PC-3 (cell line): ENCODE measurements at regions of chr1 and their contacts with region 1.

Region 1: DNA sequence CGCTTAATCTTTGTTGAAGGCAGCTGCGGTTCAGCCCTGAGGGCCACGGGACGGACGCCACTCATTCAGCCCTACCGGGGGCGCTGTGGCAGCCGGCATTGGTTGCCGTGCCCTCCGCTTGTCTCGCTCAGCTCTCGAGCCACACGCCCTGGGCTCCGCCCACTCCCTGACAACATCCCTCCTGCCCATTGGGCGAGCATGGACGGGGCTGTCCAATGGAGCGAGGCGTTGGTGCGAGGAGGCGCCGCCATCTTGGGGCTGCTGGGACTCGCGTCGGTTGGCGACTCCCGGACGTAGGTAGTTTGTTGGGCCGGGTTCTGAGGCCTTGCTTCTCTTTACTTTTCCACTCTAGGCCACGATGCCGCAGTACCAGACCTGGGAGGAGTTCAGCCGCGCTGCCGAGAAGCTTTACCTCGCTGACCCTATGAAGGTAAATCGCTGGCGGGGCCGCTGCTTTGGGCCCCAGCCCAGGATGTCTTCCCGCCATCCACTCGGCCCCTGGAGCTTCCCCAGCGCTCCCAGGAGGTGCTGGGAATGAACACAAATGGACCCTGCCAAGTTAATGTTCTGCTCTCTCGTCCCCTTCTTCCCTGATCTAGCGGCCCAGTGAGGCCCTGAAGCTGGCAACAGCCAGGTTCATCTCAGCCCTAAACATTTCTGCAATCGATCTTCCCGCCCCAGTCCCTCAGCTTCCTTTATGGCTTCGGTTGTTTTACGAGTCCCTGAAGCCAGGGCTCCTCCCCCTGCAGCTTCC is at the start of gene SRP9:
- DNase-seq: peak; percentile 100
- ATAC-seq: peak; percentile 92
- H3K4me3 ChIP-seq: peak within 1 kb of the TSS; percentile 78
- H3K27ac ChIP-seq: peak within 1 kb of the TSS; percentile 84
- H3K4me1 ChIP-seq: peaks cover 46% of the 10 kb centered on the region
- H3K27me3 ChIP-seq: no peaks in the 10 kb centered on the region
- CTCF ChIP-seq: peak; percentile 94
- total RNA-seq, gene SRP9: 241 and 306 TPM in 2 replicates

Region 2: DNA sequence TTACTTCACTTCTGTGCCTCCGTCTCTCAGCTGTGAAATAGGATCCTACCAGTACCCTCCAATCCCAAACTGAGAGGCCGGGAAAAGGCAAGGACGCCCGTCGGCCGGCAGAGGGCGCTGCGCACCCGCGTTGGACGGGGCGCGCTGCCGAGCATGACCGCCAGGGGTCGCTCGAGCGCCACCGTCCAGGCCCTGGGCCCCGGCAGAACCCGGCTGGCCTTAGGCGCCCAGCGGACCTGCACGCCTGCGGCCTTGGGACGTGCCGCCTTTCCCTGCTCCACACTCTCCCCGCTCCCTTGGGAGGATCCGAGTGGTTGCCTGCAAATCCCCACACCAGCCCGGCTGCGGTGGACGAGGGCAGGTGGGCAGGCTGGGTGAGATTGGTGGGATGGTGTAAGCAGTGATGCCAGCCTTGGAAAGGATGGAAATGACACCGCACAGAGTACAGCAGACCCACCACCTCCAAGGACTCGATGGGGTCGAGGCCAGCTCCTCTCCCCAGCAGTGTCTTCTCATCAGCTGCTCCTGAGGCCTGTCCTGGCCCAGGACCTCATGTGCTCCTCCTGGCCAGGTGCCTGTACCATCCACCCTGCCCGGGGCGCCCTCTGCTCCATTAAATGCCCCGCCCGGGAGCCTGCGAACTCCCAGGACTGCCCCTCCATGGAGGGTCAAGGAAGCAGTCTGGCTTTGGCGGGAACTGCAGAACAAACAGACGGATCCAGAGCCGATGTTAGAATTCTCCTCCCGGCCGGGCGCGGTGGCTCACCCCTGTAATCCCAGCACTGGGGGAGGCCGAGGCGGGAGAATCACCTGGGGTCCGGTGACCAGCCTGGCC is 302.6 kb before region 1 on chr1:
- CTCF ChIA-PET with region 1: interaction called, 5 read pairs
- POLR2A ChIA-PET with region 1: no interaction called
- intact Hi-C with region 1: loop called (anchors 1 kb)
- DNase-seq: peak; percentile 82
- ATAC-seq: peak; percentile 90
- H3K4me3 ChIP-seq: no peak overlapping the region; the same call in 1 of the 2 replicates
- H3K27ac ChIP-seq: no peak overlapping the region
- H3K4me1 ChIP-seq: peaks cover 10% of the 10 kb centered on the region; the same call in 1 of the 2 replicates
- H3K27me3 ChIP-seq: no peaks in the 10 kb centered on the region
- CTCF ChIP-seq: peak; percentile 100

Region 3: DNA sequence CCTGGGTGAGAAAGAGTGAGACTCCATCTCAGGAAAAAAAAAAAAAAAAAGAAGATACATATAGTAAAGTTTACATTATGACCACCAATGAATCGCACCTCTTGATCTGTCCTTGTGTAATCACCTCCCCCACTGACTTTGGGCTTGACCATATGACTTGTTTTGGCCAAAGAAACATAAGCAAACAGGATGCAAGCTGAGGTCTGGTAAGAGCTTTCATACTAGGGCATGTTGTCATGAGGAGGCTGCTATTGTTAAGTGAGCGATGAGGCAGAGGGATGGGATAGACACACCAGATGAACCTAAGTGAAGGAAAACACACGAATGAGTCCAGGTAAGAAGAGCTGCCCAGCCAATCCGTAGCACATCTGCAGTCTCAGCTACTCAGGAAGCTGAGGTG is 135.6 kb before region 1 on chr1:
- CTCF ChIA-PET with region 1: no interaction called
- POLR2A ChIA-PET with region 1: no interaction called
- intact Hi-C with region 1: no loop called
- DNase-seq: peak; percentile 72
- ATAC-seq: peak; percentile 78
- H3K4me3 ChIP-seq: no peak overlapping the region
- H3K27ac ChIP-seq: no peak overlapping the region
- H3K4me1 ChIP-seq: peaks cover 10% of the 10 kb centered on the region; the same call in 1 of the 2 replicates
- H3K27me3 ChIP-seq: no peaks in the 10 kb centered on the region
- CTCF ChIP-seq: no peak

Region 4: GRCh38 chr1:225652729-225653462 is 124.9 kb before region 1 on chr1 and contains the start of gene ENAH:
- CTCF ChIA-PET with region 1: interaction called, 14 read pairs
- POLR2A ChIA-PET with region 1: interaction called, 8 read pairs
- intact Hi-C with region 1: loop called (anchors 1 kb)
- DNase-seq: peak; percentile 88
- ATAC-seq: peak; percentile 58
- H3K4me3 ChIP-seq: peak within 1 kb of the TSS; percentile 98
- H3K27ac ChIP-seq: peak within 1 kb of the TSS; percentile 77
- H3K4me1 ChIP-seq: peaks cover 55% of the 10 kb centered on the region
- H3K27me3 ChIP-seq: no peaks in the 10 kb centered on the region
- CTCF ChIP-seq: no peak
- total RNA-seq, gene ENAH: 96.6 and 101 TPM in 2 replicates

Region 5: DNA sequence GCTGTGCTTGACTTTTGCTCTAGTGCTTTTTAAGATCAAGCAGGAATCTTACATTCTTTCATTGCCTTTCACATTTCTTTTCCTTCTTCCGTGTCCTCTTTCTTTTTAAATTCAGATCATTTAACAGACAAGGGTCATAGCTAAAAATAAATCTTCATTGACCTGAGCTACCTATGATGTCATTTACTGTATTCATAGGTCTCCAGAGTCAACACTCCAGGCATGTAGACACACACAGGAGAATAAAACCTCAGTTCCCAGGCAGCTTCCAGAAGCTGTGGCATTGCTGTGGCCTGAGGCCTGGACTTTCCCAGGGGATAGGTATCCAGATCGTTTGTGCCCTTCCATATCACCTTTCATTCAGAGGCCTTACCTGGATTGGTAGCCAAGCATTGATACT is 86.4 kb before region 1 on chr1:
- CTCF ChIA-PET with region 1: no interaction called
- POLR2A ChIA-PET with region 1: no interaction called
- intact Hi-C with region 1: no loop called
- DNase-seq: peak; percentile 22
- ATAC-seq: no peak
- H3K4me3 ChIP-seq: no peak overlapping the region
- H3K27ac ChIP-seq: no peak overlapping the region
- H3K4me1 ChIP-seq: peaks cover 22% of the 10 kb centered on the region
- H3K27me3 ChIP-seq: no peaks in the 10 kb centered on the region
- CTCF ChIP-seq: no peak

Region 6: DNA sequence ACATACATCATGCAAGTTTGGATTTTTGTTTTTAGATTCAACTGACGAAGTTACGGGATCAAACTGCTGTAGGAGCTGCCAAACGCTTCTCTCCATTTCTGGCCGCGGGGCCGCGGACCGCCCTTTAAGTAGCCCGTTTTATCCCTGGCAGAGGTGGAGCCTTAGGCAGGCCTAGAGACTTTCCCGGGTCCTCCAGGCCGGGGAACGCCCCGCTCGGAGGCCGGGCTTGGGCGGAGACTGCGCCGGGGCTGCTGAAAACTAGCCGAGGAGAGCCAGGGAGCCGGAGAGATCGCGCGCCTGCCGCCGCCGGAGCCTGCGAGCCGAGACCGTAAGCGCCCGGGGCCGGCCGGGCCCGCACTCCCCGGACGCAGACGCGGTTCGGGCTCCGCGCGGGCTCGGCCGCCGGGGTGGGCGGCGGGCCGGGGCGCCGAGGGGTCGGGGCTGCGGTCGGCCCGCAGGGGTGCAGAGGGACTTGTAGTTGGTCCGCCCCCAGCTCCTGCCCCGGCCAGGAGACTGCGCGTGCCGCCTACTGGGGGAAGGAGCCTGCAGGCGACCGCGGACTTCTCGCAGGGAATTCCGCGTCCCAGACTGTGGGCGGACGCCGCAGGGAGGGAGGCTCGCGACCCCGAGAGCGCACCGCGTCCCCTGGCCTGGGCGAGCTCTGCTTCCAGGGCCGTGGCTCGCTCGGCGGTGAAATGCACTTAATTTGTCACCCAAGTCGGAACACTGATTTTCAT is 32.2 kb after region 1 on chr1 and contains the start of gene EPHX1:
- CTCF ChIA-PET with region 1: interaction called, 8 read pairs
- POLR2A ChIA-PET with region 1: no interaction called
- intact Hi-C with region 1: loop called (anchors 1 kb)
- DNase-seq: peak; percentile 95
- ATAC-seq: peak; percentile 97
- H3K4me3 ChIP-seq: peak within 1 kb of the TSS; percentile 87
- H3K27ac ChIP-seq: peak within 1 kb of the TSS; percentile 6; the same call in 1 of the 2 replicates
- H3K4me1 ChIP-seq: peaks cover 20% of the 10 kb centered on the region
- H3K27me3 ChIP-seq: no peaks in the 10 kb centered on the region
- CTCF ChIP-seq: no peak
- total RNA-seq, gene EPHX1: 54.6 and 69.2 TPM in 2 replicates

Region 7: GRCh38 chr1:225845571-225846259 is 68.0 kb after region 1 on chr1:
- CTCF ChIA-PET with region 1: interaction called, 5 read pairs
- POLR2A ChIA-PET with region 1: no interaction called
- intact Hi-C with region 1: loop called (anchors 1 kb)
- DNase-seq: peak; percentile 86
- ATAC-seq: peak; percentile 81
- H3K4me3 ChIP-seq: no peak overlapping the region
- H3K27ac ChIP-seq: no peak overlapping the region
- H3K4me1 ChIP-seq: no peaks in the 10 kb centered on the region
- H3K27me3 ChIP-seq: no peaks in the 10 kb centered on the region
- CTCF ChIP-seq: peak; percentile 92

Region 8: GRCh38 chr1:225987491-225988316 is 209.9 kb after region 1 on chr1:
- CTCF ChIA-PET with region 1: no interaction called
- POLR2A ChIA-PET with region 1: interaction called, 14 read pairs
- intact Hi-C with region 1: no loop called
- DNase-seq: peak; percentile 76
- ATAC-seq: peak; percentile 40; the same call in 1 of the 2 replicates
- H3K4me3 ChIP-seq: no peak overlapping the region
- H3K27ac ChIP-seq: no peak overlapping the region
- H3K4me1 ChIP-seq: no peaks in the 10 kb centered on the region
- H3K27me3 ChIP-seq: no peaks in the 10 kb centered on the region
- CTCF ChIP-seq: peak; percentile 86